Transverse colon (tissue), 4 donors: ENCODE measurements at regions of chr4 and their contacts with region 1.

Region 1: DNA sequence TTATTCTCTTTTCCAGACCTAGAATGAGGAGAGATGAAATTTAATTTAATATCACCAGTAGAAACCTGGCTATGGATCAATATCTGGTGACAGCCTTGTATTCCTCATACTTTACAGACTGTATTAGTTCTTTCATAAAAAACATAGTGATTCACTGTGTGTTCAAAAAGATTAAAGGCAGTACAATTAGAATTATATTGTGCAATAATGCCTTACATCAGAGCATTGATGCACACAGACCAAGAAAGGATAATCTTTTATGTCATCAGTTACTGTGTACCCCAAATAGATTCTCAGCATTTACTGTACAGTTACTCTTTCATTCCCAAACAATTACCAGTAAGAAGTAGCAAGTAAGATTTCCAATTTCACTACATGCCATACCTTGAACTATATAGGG is 260.5 kb upstream of the ANXA10 start:
- DNase-seq: no peak
- H3K4me3 ChIP-seq: no peak overlapping the region
- H3K27ac ChIP-seq: no peak overlapping the region
- H3K4me1 ChIP-seq: no peaks in the 10 kb centered on the region
- H3K27me3 ChIP-seq: no peaks in the 10 kb centered on the region
- CTCF ChIP-seq: no peak
- EP300 ChIP-seq: no peak
- POLR2A ChIP-seq: no peak

Region 2: GRCh38 chr4:167428156-167428555 is 403.7 kb before region 1 on chr4:
- in situ Hi-C with region 1: no loop called
- intact Hi-C with region 1: no loop called
- DNase-seq: no peak
- H3K4me3 ChIP-seq: no peak overlapping the region
- H3K27ac ChIP-seq: no peak overlapping the region
- H3K4me1 ChIP-seq: no peaks in the 10 kb centered on the region
- H3K27me3 ChIP-seq: no peaks in the 10 kb centered on the region
- CTCF ChIP-seq: no peak
- EP300 ChIP-seq: no peak
- POLR2A ChIP-seq: no peak

Region 3: GRCh38 chr4:167897116-167897515 is 65.3 kb after region 1 on chr4:
- in situ Hi-C with region 1: no loop called
- intact Hi-C with region 1: loop called (anchors 1 kb)
- DNase-seq: no peak
- H3K4me3 ChIP-seq: no peak overlapping the region
- H3K27ac ChIP-seq: no peak overlapping the region
- H3K4me1 ChIP-seq: no peaks in the 10 kb centered on the region
- H3K27me3 ChIP-seq: no peaks in the 10 kb centered on the region
- CTCF ChIP-seq: no peak
- EP300 ChIP-seq: no peak
- POLR2A ChIP-seq: no peak

Region 4: DNA sequence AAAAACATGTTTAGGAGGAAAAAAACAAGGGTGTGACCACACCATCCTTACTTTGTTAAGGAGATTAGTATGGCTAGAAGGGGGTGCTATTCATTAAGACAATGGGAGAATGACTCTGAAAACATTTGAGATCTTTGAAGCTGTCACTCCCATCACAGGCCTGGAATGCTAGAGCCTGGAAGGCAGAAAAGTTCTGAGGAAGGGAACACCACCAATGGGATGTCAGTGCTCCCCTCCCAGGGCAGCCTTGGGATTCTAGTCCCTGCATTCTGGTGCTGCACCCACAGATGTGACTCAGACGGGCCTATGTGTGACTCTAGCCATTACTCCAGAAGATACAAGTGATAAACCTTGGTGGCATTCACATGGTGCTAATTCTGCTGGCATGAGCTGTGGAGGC is 98.3 kb after region 1 on chr4:
- in situ Hi-C with region 1: no loop called
- intact Hi-C with region 1: no loop called
- DNase-seq: no peak
- H3K4me3 ChIP-seq: no peak overlapping the region
- H3K27ac ChIP-seq: no peak overlapping the region
- H3K4me1 ChIP-seq: no peaks in the 10 kb centered on the region
- H3K27me3 ChIP-seq: no peaks in the 10 kb centered on the region
- CTCF ChIP-seq: no peak
- EP300 ChIP-seq: no peak
- POLR2A ChIP-seq: no peak